ENCODE measurements at regions of chr10 and their contacts with region 1.

Region 1: DNA sequence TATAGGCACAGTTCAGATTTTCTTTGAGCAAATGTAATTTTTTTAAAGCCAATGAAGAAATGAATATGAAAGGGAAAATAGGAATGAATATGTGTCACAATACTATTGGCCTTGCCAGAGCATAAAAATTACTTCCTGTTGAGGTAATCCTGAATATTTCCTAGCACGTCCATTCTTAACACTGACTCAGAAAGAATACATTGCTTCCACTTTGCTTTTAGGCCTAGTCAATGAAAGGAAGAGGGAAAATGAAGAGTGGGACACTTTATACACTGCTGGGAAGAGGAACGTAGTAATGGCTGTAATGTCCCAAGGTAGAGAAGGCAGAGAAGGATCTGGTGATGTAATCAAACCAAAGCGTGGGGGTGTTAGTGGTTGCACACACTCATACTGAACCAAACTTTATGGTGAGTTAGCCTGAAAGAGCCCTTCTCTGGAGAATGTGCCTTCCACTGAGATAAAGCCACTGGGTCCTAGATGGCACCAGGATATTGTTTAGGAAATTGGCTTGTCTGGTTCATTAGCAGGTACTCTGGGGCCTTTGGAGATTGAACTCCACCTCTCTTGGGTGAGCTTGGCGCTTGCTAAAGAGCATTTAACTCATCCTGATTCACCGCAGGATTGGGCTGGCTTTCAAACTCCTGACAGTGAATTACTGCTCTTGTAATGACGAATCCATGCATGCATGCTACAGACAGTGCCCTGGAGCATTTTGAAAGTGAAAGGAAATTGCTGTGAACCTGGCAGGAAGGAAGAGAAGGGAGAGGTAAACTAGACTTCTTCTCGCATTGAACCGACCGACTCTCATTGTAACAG is 254.9 kb downstream of the KIAA1217 start:
- DNase-seq: no peak
- ATAC-seq: peak in 3 of 4 donors; percentile 8 to 57 (median 38)
- H3K4me3 ChIP-seq: no peak overlapping the region
- H3K27ac ChIP-seq: peak overlapping the region in 9 of 12 donors; percentile 10 to 70 (median 29)
- H3K4me1 ChIP-seq: peaks cover 6 to 54% (median 39%) of the 10 kb centered on the region in 12 donors
- H3K27me3 ChIP-seq: no peaks in the 10 kb centered on the region
- CTCF ChIP-seq: no peak
- POLR2A ChIP-seq: no peak

Region 2: DNA sequence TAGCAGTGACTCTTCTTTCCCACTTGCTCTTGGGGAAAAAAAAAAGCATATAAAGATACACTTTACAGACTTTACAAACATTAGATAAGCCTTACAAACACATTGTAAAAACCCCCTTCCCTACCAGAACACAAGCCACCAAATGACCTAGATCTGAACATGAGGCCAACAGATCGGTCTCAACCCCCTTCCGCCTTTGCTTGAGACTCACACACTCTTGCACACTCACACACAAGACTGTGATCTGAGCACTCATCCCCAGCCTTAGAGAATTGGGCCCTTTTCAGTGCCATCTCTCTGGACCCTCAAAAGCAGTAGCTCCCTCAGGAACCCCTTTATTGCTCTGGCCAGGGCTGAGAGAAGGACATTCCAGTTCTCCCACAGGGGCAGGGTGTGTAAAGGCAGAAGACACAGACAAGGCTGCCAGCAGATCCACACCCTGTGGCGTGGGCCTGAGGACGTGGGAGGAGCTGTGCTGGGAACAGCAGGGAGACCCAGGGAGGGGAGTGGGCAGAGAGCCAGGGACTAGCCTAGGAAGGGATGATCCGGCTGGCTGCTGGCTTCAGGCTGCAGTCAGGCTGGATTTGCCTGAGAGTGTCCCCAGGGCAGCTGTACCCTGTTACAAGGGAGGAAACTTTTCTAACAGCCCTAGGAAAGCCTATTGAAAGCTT is 48.2 kb before region 1 on chr10:
- intact Hi-C with region 1: loop called in 1 of 10 experiments (anchors 5 kb)
- DNase-seq: peak; percentile 85 to 95 (median 91)
- ATAC-seq: peak; percentile 90 to 95 (median 92)
- H3K4me3 ChIP-seq: no peak overlapping the region
- H3K27ac ChIP-seq: peak overlapping the region; percentile 2 to 70 (median 50)
- H3K4me1 ChIP-seq: peaks cover 2 to 34% (median 18%) of the 10 kb centered on the region in 12 donors
- H3K27me3 ChIP-seq: no peaks in the 10 kb centered on the region
- CTCF ChIP-seq: no peak
- POLR2A ChIP-seq: no peak

Region 3: DNA sequence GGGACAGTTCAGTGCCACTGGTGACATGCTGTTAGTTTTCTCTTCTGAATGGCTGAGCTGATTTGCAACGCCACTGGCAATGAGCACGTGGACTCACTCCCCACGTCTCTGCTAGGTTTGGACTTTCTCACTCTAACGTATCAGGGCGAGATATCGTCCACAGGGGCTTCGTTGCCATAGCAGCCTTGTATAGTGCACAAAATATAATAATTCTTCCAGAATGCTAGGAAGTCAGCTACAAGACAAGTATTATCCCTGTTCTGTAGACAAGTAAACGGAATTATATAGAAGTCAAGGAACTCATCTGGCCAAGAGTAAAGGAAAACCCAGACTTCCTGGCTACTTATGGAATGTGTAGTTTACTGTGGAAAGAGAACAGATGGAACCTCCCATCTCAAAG is 33.1 kb after region 1 on chr10:
- intact Hi-C with region 1: no loop called
- DNase-seq: no peak
- ATAC-seq: no peak
- H3K4me3 ChIP-seq: no peak overlapping the region
- H3K27ac ChIP-seq: no peak overlapping the region
- H3K4me1 ChIP-seq: peaks cover 0 to 6% (median 0%) of the 10 kb centered on the region in 12 donors
- H3K27me3 ChIP-seq: no peaks in the 10 kb centered on the region
- CTCF ChIP-seq: no peak
- POLR2A ChIP-seq: no peak

Region 4: DNA sequence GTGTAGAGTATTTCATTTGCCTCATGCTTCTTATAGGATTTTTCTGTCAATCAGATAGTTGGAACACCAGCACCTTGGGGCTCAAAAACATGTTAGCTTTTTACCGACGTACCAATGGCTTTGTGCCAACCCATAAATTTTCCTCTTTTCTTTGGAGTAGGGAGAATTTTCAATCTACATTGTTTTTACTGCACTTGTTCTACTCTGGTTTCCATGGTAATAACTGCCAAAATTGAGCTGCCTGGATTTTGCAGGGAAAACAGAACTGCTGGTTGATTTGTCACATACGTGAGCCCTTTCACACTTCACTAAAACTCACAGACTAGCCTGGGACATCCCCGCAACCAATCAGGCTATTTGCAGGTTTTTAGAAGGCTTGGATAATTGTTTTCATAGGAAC is 70.2 kb after region 1 on chr10:
- intact Hi-C with region 1: no loop called
- DNase-seq: no peak
- ATAC-seq: no peak
- H3K4me3 ChIP-seq: no peak overlapping the region
- H3K27ac ChIP-seq: no peak overlapping the region
- H3K4me1 ChIP-seq: peaks cover 0 to 6% (median 0%) of the 10 kb centered on the region in 12 donors
- H3K27me3 ChIP-seq: no peaks in the 10 kb centered on the region
- CTCF ChIP-seq: no peak
- POLR2A ChIP-seq: no peak